Activated CD4-positive, alpha-beta T cell treated with anti-CD3 and anti-CD28 coated beads, Interleukin-2, amount 10 ng/mL, durations not matched to agents 24 days and 14 days (primary cell): ENCODE measurements at regions of chr20 and their contacts with region 1.

Region 1: DNA sequence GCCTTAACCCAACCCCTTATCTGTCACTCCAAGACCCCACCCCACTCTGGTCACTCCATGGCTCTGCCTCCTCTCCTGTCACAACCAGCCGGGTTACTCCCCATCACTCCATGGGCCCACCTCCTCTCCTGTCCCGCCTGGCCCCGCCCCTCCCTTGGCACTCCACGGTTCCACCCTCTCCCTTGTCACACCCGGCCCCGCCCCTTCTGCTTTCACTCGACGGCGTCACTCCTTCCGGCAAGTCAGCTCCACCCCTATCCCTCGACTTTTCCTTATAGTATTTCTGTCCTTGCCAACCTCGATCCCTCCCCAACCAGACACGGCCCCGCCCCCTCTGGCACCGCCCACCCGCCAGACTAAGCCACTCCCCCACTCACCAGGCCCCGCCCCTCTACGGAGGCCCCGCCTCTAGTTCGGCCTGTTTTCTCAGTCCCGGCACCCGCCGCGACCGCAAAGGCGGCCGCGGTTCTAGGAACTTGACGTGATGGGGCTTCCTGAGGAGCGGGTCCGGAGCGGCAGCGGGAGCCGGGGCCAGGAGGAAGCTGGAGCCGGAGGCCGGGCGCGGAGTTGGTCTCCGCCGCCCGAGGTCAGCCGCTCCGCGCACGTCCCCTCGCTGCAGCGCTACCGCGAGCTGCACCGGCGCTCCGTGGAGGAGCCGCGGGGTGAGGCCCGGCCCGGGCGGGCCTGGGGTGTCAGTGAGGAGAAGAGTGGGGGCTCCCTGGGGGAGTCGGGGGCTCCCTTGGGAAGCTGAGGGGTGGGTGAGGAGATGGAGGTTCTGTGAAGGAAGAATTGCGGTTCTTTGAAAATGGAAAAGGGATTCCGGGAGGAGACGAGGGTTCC is at the start of gene ACSS2:
- DNase-seq: peak; percentile 99
- H3K4me3 Mint-ChIP-seq: peak within 1 kb of the TSS; percentile 96
- H3K27ac Mint-ChIP-seq: peak within 1 kb of the TSS; percentile 89
- H3K4me1 Mint-ChIP-seq: peaks cover 61% of the 10 kb centered on the region
- H3K27me3 Mint-ChIP-seq: no peaks in the 10 kb centered on the region
- total RNA-seq, gene ACSS2: 44.8 and 54.4 TPM in 2 replicates

Region 2: GRCh38 chr20:33992923-33993575 is 883.3 kb before region 1 on chr20:
- intact Hi-C with region 1: loop called (anchors 5 kb)
- DNase-seq: peak; percentile 100
- H3K4me3 Mint-ChIP-seq: peak overlapping the region; percentile 83
- H3K27ac Mint-ChIP-seq: peak overlapping the region; percentile 96
- H3K4me1 Mint-ChIP-seq: peaks cover 48% of the 10 kb centered on the region
- H3K27me3 Mint-ChIP-seq: no peaks in the 10 kb centered on the region

Region 3: DNA sequence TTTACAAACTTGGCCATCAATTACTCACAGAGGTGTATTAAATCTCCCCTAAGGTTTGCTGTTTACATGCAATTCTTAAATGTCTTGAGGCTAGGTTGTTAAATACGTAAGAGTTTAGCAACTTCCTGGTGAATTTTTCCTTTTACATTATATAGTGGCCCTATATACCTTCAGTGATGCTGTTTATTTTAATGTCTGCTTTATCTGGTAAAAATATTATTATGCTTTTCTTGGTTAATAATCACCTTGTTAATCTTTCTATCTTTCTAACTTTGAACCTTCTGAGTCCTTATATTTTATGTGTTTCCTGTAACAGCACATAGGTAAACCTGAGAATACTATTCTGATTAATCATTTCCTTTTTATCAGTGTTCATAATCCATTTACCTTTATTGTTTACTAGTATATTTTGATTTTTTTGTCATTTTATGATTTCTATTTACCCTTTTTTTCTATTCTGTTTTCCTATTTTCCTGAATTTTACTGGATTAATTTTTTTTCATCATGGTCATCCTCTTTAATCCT is 114.3 kb before region 1 on chr20:
- intact Hi-C with region 1: no loop called
- DNase-seq: no peak
- H3K4me3 Mint-ChIP-seq: no peak overlapping the region
- H3K27ac Mint-ChIP-seq: no peak overlapping the region
- H3K4me1 Mint-ChIP-seq: no peaks in the 10 kb centered on the region
- H3K27me3 Mint-ChIP-seq: no peaks in the 10 kb centered on the region

Region 4: GRCh38 chr20:34861386-34862084 is 14.8 kb before region 1 on chr20:
- intact Hi-C with region 1: no loop called
- DNase-seq: no peak
- H3K4me3 Mint-ChIP-seq: no peak overlapping the region
- H3K27ac Mint-ChIP-seq: no peak overlapping the region
- H3K4me1 Mint-ChIP-seq: peaks cover 4% of the 10 kb centered on the region
- H3K27me3 Mint-ChIP-seq: no peaks in the 10 kb centered on the region

Region 5: GRCh38 chr20:34891166-34892062 is 15.0 kb after region 1 on chr20:
- intact Hi-C with region 1: loop called (anchors 1 kb)
- DNase-seq: peak; percentile 75
- H3K4me3 Mint-ChIP-seq: peak overlapping the region; percentile 46
- H3K27ac Mint-ChIP-seq: peak overlapping the region; percentile 90
- H3K4me1 Mint-ChIP-seq: peaks cover 49% of the 10 kb centered on the region
- H3K27me3 Mint-ChIP-seq: no peaks in the 10 kb centered on the region

Region 6: GRCh38 chr20:34943808-34944568 is 67.6 kb after region 1 on chr20:
- intact Hi-C with region 1: no loop called
- DNase-seq: no peak
- H3K4me3 Mint-ChIP-seq: no peak overlapping the region
- H3K27ac Mint-ChIP-seq: no peak overlapping the region
- H3K4me1 Mint-ChIP-seq: no peaks in the 10 kb centered on the region
- H3K27me3 Mint-ChIP-seq: no peaks in the 10 kb centered on the region

Region 7: GRCh38 chr20:34955232-34956040 is 79.1 kb after region 1 on chr20 and contains the starts of genes GSS and MYH7B:
- intact Hi-C with region 1: loop called (anchors 1 kb)
- DNase-seq: peak; percentile 100
- H3K4me3 Mint-ChIP-seq: peak within 1 kb of the TSS; percentile 95
- H3K27ac Mint-ChIP-seq: peak within 1 kb of the TSS; percentile 95
- H3K4me1 Mint-ChIP-seq: peaks cover 25% of the 10 kb centered on the region
- H3K27me3 Mint-ChIP-seq: no peaks in the 10 kb centered on the region
- total RNA-seq, gene GSS: 71.0 and 71.3 TPM in 2 replicates
- total RNA-seq, gene MYH7B: 0.19 and 0.52 TPM in 2 replicates

Region 8: DNA sequence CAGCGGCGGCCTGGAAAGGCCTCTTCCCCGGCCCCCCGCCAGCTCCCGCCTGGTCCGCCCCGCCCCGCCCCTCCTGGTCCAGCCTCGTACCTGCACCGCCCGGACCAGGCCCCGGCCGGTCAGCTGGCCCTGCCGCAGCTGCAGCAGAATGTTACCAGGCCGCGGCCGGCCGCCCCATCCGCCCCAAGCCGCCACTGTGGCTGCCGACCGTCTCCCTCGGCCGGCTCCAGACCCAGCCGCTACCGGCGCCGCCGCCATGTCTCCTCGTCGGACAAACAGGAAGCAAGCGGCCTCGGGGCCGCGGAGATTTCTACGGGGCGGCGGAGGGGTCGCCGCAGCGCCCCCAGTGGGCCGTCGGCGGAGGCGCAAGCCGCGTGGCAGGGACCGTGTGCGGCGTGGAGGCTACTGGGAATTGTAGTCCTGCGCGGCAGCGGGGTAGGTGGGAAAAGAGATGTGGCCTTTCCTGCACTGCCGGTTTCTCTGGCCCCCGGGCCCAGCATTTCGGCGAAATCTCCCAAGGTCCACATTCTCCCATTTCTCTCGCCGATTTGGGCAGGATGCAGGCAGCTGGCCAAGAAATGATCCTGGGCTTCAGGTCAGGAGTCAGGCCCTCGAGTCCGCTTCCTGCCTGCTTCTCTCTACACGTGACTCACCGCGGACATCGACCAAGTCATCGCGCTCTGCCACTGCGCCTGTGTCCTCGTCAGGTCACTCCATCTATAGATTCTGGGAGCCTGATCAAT is 216.3 kb after region 1 on chr20 and contains the start of gene TRPC4AP:
- intact Hi-C with region 1: loop called (anchors 2 kb)
- DNase-seq: peak; percentile 97
- H3K4me3 Mint-ChIP-seq: peak within 1 kb of the TSS; percentile 91
- H3K27ac Mint-ChIP-seq: peak within 1 kb of the TSS; percentile 95
- H3K4me1 Mint-ChIP-seq: peaks cover 39% of the 10 kb centered on the region
- H3K27me3 Mint-ChIP-seq: no peaks in the 10 kb centered on the region
- total RNA-seq, gene TRPC4AP: 46.4 and 47.8 TPM in 2 replicates

Region 9: GRCh38 chr20:35207950-35208611 is 331.7 kb after region 1 on chr20:
- intact Hi-C with region 1: loop called (anchors 2 kb)
- DNase-seq: peak; percentile 93
- H3K4me3 Mint-ChIP-seq: no peak overlapping the region
- H3K27ac Mint-ChIP-seq: no peak overlapping the region
- H3K4me1 Mint-ChIP-seq: no peaks in the 10 kb centered on the region
- H3K27me3 Mint-ChIP-seq: no peaks in the 10 kb centered on the region